Dorsolateral prefrontal cortex (tissue), 120 donors: ENCODE measurements at regions of chr6 and their contacts with region 1.

Region 1: DNA sequence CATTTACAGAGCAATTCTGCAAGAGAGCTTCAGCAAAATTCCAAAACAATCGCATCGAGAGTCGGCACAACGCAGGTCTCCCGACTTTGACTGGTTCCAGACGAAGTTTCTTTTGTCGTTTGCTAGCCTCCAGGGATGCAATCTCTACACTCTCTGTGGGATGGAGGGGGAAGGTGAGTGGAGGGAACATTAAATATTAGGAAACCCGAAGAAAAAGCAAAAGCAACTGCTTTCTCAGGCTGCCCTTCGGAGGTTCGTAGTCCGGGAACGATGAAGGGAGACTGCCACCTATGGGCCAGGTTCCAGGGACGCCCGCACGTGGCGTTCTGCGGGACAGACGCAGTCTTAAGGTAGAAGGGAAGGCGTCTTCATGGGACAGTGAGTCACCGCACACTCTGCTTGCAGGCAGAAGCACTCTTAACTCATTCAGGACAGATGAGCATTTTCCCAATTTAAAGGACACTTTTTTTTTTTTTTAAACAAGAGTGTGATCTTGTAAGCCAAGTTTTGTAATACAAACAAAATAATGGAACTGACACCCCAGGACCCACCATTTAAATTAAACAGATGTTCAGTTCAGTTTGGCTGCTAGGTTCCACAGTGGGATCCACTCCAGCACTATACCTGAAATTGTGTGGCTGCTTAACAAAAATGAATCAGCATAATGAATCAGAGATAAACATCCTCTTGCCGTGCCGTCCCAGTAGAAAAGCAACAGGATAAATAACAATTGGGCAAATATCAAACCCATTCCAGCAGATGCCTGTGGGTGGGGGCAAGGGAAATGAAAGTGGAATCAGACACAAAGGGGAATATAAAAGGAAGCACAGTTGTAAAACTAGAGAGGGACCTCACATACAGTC is 65.8 kb upstream of the ARMC2 start:
- DNase-seq: peak; percentile 73 to 84 (median 80)
- H3K4me3 ChIP-seq: peak overlapping the region; percentile 28 to 79 (median 60)
- H3K27ac ChIP-seq: peak overlapping the region in 28 of 59 donors; percentile 4 to 79 (median 52)
- H3K27me3 ChIP-seq: no peaks in the 10 kb centered on the region
- CTCF ChIP-seq: peak; percentile 41 to 93 (median 80)

Region 2: GRCh38 chr6:108464418-108465093 is 317.9 kb before region 1 on chr6:
- intact Hi-C with region 1: no loop called
- DNase-seq: no peak
- H3K4me3 ChIP-seq: peak overlapping the region in 4 of 59 donors; percentile 1 to 13 (median 6)
- H3K27ac ChIP-seq: peak overlapping the region in 26 of 59 donors; percentile 0 to 72 (median 22)
- H3K27me3 ChIP-seq: no peaks in the 10 kb centered on the region
- CTCF ChIP-seq: no peak

Region 3: DNA sequence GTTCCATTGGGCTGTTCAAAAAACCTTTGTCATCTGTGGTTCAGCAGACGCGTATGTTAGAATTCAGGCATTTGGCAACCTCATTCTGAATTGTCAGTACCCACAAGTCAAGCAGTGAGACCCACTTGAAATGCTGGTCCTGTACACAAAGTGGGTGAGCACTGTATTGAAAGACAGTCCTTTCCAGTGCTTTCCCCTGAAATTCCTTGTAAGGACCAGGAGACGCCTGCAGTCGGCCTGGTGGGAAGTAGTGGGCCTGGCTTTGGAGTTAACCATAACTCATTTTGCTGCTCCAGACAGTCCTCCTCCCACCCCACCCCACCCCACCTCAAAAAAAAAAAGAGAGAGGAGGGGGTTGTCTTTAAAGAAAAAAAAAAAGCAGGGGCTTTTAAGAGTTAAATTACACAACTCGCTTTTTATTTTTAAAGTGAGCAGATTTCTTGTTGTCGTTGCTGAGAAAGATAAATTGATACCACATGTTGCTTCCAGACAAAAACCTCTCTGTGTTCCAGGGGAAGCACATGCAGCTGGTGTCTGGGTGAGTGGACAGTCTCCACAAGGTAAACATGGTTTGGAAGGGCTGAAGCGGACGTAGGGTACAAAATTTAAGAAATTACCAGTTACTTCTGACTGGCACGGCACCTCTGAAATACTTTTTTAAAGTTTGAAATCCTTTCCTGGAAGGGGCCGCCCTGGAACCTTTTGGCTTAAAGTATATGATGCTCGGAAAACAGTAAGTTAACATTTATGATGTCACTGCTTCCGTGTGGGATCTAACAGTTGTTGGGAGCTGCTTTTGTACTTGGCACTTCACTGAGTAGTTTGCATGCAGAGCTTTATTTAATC is 126.4 kb before region 1 on chr6:
- intact Hi-C with region 1: no loop called
- DNase-seq: no peak
- H3K4me3 ChIP-seq: peak overlapping the region in 21 of 59 donors; percentile 5 to 42 (median 21)
- H3K27ac ChIP-seq: peak overlapping the region in 41 of 59 donors; percentile 5 to 75 (median 43)
- H3K27me3 ChIP-seq: no peaks in the 10 kb centered on the region
- CTCF ChIP-seq: no peak

Region 4: DNA sequence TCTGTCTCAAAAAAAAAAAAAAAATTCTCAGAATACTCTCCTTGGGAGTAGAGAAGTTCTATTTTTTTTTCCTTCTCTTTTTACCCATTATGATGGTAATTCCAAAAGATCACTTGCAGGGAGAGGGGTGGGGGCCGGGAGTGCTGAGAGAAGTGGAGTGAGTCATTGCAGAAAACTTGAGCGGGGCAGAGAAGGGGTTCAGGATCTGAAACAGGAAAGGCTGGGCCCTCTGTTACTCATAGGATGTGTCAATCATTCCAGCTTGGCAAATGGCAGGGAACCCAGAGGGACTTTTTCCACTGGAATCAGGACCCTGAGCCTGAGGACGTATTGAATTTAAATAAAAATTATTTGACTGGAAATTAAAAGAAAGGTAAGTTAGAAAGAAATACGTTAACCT is 45.6 kb before region 1 on chr6:
- intact Hi-C with region 1: no loop called
- DNase-seq: no peak
- H3K4me3 ChIP-seq: no peak overlapping the region
- H3K27ac ChIP-seq: no peak overlapping the region
- H3K27me3 ChIP-seq: no peaks in the 10 kb centered on the region
- CTCF ChIP-seq: no peak

Region 5: DNA sequence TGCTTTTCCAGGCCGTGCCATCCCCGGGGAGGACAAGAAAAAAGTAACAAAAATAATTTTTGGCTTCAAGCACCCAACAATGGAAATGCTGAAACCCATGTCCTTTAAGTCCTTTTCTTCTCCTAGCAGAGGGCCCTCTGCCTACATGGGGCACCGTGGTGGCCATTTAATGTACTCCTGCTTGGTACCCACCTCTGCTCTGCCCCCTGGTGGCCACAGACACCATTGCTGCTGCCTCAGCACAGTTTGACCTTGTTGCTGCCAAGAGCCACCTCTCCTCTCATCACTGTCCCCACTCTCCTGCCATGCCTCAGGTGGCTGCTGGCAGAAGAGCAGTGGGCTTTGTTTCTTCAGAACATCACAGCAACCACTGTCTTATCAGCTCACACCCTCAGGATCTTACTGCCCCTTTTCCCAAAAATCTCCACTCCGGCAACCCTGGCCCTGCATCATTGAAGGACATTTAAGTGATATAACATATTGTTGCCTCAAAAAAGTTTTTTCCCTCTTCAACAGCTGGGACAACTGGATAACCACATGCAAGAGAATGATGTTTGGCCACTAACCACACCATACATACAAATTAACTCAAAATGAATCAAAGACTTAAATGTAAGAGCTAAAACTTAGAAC is 52.9 kb after region 1 on chr6:
- intact Hi-C with region 1: loop called in 1 of 2 experiments (anchors 5 kb)
- DNase-seq: peak; percentile 86 to 93 (median 90)
- H3K4me3 ChIP-seq: peak overlapping the region in 7 of 59 donors; percentile 2 to 31 (median 9)
- H3K27ac ChIP-seq: peak overlapping the region in 28 of 59 donors; percentile 3 to 70 (median 41)
- H3K27me3 ChIP-seq: no peaks in the 10 kb centered on the region
- CTCF ChIP-seq: peak; percentile 89 to 99 (median 96)

Region 6: GRCh38 chr6:108896111-108896661 is 113.8 kb after region 1 on chr6:
- intact Hi-C with region 1: loop called in 1 of 2 experiments (anchors 10 kb)
- DNase-seq: no peak
- H3K4me3 ChIP-seq: no peak overlapping the region
- H3K27ac ChIP-seq: peak overlapping the region in 18 of 59 donors; percentile 3 to 73 (median 46)
- H3K27me3 ChIP-seq: no peaks in the 10 kb centered on the region
- CTCF ChIP-seq: no peak

Region 7: DNA sequence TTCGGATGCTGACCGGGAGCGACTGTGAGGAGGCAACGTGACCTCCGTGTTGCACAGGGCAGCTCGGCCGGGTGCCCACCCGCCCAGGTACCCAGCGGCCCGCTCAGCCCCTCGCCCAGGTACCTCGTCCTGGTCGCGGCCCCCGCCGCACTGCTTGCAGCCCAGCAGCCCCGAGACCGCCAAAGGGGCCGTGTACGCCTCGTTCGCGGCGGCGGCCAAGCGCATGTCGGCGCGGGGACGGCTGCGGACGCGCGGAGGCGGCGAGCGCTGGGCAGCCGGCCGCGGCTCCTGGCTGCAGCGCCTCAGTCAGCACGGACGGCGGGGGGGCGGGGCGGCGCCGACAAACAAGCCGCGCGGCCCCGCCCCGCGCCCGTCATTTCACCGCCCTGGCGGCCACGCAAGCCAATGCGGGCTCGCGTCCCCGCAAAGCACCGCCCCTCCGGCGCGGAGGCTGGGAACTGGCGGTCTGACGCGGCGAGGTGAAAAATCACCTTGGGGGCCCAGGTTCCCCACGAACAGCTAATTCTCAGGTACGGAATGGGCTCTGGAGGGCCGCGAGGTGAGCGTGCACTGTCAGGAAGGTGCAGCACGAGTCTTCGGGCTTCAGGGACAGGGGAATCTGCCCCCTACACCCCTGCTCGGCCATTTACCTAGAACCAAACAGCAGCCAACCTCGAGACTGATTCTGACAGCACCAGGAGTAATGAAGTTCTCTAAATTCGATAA is 227.0 kb after region 1 on chr6:
- intact Hi-C with region 1: no loop called
- DNase-seq: peak; percentile 88 to 97 (median 94)
- H3K4me3 ChIP-seq: peak overlapping the region; percentile 67 to 99 (median 93)
- H3K27ac ChIP-seq: peak overlapping the region; percentile 90 to 99 (median 97)
- H3K27me3 ChIP-seq: no peaks in the 10 kb centered on the region
- CTCF ChIP-seq: peak in 37 of 56 donors; percentile 14 to 60 (median 35)

Region 8: DNA sequence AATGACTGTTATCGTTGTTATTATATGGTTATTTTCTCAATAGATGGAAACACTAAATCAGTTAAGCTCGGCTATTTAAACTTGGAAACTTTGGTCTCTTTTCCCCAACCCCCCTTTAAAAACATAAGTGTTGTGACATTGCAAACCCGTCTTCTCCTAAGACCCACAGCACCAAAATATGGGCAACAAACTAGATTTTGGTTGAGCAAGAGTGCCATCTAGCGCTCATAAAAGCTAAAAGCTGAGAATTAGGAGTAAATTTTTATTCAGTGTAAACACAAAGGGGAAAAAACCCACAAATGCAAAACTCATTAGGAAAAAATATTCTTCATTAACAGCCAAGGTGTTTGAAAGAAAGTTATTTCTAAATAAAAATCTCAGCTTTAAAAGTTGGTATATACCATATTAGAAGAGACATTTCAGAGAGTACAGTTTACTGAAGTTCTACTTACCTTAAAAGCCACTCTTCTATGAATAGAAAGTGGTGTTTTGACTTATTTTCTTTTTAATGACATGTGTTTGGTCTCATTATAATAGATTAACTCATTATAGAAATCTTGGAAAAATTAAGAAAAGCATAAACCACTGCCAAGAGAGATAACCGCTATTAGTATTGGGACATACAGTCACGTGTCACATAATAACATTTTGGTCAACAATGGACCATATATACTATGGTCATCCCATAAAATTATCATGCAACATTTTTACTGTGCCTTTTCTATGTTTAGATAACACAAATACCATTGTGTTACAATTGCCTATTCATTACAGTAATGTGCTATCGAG is 291.1 kb after region 1 on chr6:
- intact Hi-C with region 1: loop called in 1 of 2 experiments (anchors 10 kb)
- DNase-seq: peak in 2 of 10 donors; percentile 45 to 48
- H3K4me3 ChIP-seq: peak overlapping the region in 8 of 59 donors; percentile 3 to 30 (median 6)
- H3K27ac ChIP-seq: peak overlapping the region in 1 of 59 donors; percentile 39
- H3K27me3 ChIP-seq: no peaks in the 10 kb centered on the region
- CTCF ChIP-seq: peak; percentile 60 to 91 (median 75)